Right cardiac atrium (tissue), 5 donors: ENCODE measurements at regions of chr1 and their contacts with region 1.

Region 1: GRCh38 chr1:186618401-186619170 is 61.6 kb downstream of the PTGS2 start:
- DNase-seq: peak; percentile 46 to 71 (median 69)
- ATAC-seq: peak; percentile 85 to 89
- H3K4me3 ChIP-seq: peak overlapping the region; percentile 46
- H3K27ac ChIP-seq: no peak overlapping the region
- H3K4me1 ChIP-seq: no peaks in the 10 kb centered on the region
- H3K27me3 ChIP-seq: no peaks in the 10 kb centered on the region

Region 2: GRCh38 chr1:186679924-186680244 is 61.3 kb after region 1 on chr1:
- intact Hi-C with region 1: loop called in 1 of 4 experiments (anchors 10 kb)
- DNase-seq: no peak
- ATAC-seq: peak; percentile 74 to 79
- H3K4me3 ChIP-seq: peak overlapping the region; percentile 74
- H3K27ac ChIP-seq: peak overlapping the region; percentile 6
- H3K4me1 ChIP-seq: no peaks in the 10 kb centered on the region
- H3K27me3 ChIP-seq: no peaks in the 10 kb centered on the region

Region 3: GRCh38 chr1:186700712-186701111 is 82.1 kb after region 1 on chr1:
- intact Hi-C with region 1: no loop called
- DNase-seq: no peak
- ATAC-seq: no peak
- H3K4me3 ChIP-seq: no peak overlapping the region
- H3K27ac ChIP-seq: no peak overlapping the region
- H3K4me1 ChIP-seq: no peaks in the 10 kb centered on the region
- H3K27me3 ChIP-seq: no peaks in the 10 kb centered on the region